ENCODE measurements at regions of chr21 and their contacts with region 1.

Region 1: DNA sequence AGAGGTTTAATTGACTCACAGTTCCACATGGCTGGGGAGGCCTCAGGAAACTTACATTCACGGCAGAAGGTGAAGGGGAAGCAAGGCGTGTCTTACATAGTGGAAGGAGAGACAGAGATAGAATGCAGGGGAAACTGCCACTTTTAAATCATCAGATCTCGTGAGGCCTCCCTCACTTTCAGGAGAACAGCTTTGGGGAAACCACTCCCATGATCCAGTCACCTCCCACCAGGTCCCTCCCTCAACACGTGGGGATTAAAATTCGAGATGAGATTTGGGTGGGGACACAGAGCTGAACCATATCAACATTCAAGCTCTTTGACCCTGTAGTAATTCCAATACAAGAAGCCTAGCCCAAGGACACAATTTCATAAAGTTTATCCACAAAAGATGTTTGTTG is 13.7 kb downstream of the PIGP start:
- DNase-seq: no peak
- ATAC-seq: no peak
- H3K4me3 Mint-ChIP-seq: no peak overlapping the region
- H3K27ac Mint-ChIP-seq: no peak overlapping the region
- H3K4me1 Mint-ChIP-seq: peaks cover 0 to 8% (median 4%) of the 10 kb centered on the region in 4 donors
- H3K27me3 Mint-ChIP-seq: no peaks in the 10 kb centered on the region

Region 2: DNA sequence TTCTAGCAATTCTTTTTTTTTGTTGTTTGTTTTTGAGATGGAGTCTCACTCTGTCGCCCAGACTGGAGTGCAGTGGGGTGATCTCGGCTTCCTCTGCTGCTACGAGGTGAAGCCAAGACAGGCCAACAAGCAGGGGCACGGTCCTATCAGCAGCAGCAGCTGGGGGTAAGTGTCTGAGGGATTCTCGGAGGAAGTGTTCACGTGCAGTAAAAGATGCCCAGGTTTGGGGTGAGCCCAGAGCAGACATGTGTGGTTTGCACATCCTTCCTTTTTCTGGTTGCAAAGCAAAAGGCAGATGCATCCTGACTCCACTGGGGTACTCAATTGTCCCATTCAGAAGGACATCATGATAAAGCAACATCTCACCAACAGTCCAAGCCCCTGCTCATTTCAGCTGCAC is 14.0 kb before region 1 on chr21:
- POLR2A ChIA-PET with region 1: no interaction called
- DNase-seq: peak in 6 of 10 donors; percentile 10 to 46 (median 22)
- ATAC-seq: peak; percentile 84 to 99
- H3K4me3 Mint-ChIP-seq: peak overlapping the region in 6 of 10 donors; percentile 3 to 56 (median 22)
- H3K27ac Mint-ChIP-seq: peak overlapping the region in 4 of 10 donors; percentile 17 to 68 (median 28)
- H3K4me1 Mint-ChIP-seq: peaks cover 6 to 14% (median 11%) of the 10 kb centered on the region in 4 donors
- H3K27me3 Mint-ChIP-seq: peaks cover 0 to 5% (median 0%) of the 10 kb centered on the region in 5 donors

Region 3: DNA sequence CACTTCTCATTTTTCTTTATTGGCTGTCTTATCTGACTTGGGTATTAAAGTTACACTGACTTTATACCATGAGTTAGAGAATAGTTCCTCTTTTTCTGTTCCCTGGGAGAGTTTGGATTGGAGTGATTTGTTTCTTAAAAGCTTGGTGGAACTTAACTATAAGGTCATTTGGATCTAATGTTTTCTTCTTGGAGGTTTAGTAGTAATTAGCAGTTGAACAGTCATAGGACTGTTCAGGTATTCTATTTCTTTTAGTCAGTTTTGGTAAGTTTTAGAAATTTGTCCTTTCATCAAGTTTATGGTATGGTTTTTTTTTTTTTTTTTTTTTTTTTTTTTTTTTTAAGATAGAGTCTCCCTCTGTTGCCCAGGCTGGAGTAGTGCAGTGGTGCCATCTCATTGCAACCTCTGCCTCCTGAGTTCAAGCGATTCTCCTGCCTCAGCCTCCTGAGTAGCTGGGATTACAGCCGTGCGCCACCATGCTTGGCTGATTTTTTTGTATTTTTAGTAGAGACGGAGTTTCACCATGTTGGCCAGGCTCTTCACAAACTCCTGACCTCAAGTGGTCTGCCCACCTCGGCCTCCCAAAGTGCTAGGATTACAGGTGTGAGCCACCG is 20.1 kb after region 1 on chr21:
- POLR2A ChIA-PET with region 1: interaction called, 12 read pairs
- DNase-seq: no peak
- ATAC-seq: peak; percentile 30 to 66
- H3K4me3 Mint-ChIP-seq: peak overlapping the region in 2 of 10 donors; percentile 41 to 73
- H3K27ac Mint-ChIP-seq: peak overlapping the region in 3 of 10 donors; percentile 5 to 52 (median 5)
- H3K4me1 Mint-ChIP-seq: peaks cover 25 to 82% (median 66%) of the 10 kb centered on the region in 4 donors
- H3K27me3 Mint-ChIP-seq: no peaks in the 10 kb centered on the region

Region 4: DNA sequence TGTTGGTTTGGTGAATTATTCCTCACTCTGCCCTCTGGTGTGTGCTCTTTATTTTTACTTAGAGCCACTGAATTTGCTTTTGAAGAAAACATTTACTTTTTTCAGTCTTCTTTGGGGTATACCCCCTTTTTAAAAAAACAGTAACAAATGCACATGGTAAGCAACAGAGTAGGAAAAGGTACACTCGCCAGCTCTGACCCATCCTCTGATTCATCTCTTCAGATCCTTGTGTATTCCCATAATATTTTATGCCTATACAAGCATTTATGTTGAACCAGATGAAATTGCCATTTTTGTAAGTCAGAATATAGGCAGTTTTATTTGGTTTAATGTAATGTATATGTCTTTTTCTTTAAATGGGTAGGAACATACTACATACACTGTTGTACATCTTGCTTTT is 42.2 kb after region 1 on chr21:
- POLR2A ChIA-PET with region 1: no interaction called
- DNase-seq: no peak
- ATAC-seq: no peak
- H3K4me3 Mint-ChIP-seq: no peak overlapping the region
- H3K27ac Mint-ChIP-seq: peak overlapping the region in 1 of 10 donors; percentile 38
- H3K4me1 Mint-ChIP-seq: peaks cover 5 to 15% (median 10%) of the 10 kb centered on the region in 4 donors
- H3K27me3 Mint-ChIP-seq: no peaks in the 10 kb centered on the region

Measured in naive thymus-derived CD8-positive, alpha-beta T cell (primary cell).